ENCODE measurements at regions of chr6 and their contacts with region 1.

Region 1: GRCh38 chr6:147839708-147840610 is 331.5 kb downstream of the SAMD5 start:
- DNase-seq: no peak
- ATAC-seq: no peak
- H3K4me3 ChIP-seq: no peak overlapping the region
- H3K27ac ChIP-seq: no peak overlapping the region
- H3K4me1 ChIP-seq: no peaks in the 10 kb centered on the region
- H3K27me3 ChIP-seq: no peaks in the 10 kb centered on the region
- CTCF ChIP-seq: no peak
- POLR2A ChIP-seq: no peak

Region 2: DNA sequence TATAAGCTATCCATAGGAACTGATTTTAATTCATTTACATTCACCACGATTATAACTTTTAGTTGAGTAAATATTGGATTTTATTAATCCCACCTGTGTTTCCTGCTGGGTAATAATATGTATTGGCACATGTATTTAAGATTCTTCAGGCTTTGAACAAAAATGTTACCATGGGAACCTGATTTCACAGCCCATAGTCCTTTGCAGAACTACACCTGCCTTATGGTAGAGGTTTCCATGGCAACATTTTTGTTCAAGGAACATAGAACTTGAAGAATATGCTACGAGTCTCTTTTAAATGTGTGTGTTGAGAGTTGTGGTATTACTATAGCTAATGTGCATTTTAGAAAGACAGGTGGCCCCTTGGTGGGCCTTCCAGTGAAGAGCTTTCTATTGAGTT is 14.1 kb before region 1 on chr6:
- in situ Hi-C with region 1: no loop called
- intact Hi-C with region 1: loop called (anchors 1 kb)
- DNase-seq: no peak
- ATAC-seq: no peak
- H3K4me3 ChIP-seq: no peak overlapping the region
- H3K27ac ChIP-seq: no peak overlapping the region
- H3K4me1 ChIP-seq: no peaks in the 10 kb centered on the region
- H3K27me3 ChIP-seq: no peaks in the 10 kb centered on the region
- CTCF ChIP-seq: no peak
- POLR2A ChIP-seq: no peak

Region 3: DNA sequence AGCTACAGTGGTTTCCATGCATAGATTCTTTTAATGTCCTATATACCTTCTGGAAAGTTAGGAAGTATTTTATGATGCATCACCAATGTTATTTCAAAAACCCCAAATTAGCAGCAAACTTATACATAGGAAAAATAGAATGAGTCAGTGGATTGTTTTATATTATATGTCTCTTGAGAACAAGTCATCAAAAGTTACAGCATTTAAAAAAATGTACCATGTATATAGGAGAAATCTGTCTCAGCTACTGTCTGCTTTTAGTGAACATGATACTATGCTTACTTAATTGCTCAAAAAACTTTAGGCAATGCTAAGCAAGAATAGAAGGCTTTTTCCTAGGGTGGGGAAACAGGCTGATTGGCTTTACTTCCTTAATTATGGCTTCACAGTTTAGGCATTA is 33.9 kb after region 1 on chr6:
- in situ Hi-C with region 1: no loop called
- intact Hi-C with region 1: no loop called
- DNase-seq: no peak
- ATAC-seq: no peak
- H3K4me3 ChIP-seq: no peak overlapping the region
- H3K27ac ChIP-seq: no peak overlapping the region
- H3K4me1 ChIP-seq: peaks cover 0 to under 1% of the 10 kb centered on the region in 2 donors
- H3K27me3 ChIP-seq: no peaks in the 10 kb centered on the region
- CTCF ChIP-seq: no peak
- POLR2A ChIP-seq: no peak

Region 4: GRCh38 chr6:147936703-147937470 is 96.9 kb after region 1 on chr6:
- in situ Hi-C with region 1: no loop called
- intact Hi-C with region 1: no loop called
- DNase-seq: no peak
- ATAC-seq: no peak
- H3K4me3 ChIP-seq: no peak overlapping the region
- H3K27ac ChIP-seq: no peak overlapping the region
- H3K4me1 ChIP-seq: no peaks in the 10 kb centered on the region
- H3K27me3 ChIP-seq: no peaks in the 10 kb centered on the region
- CTCF ChIP-seq: no peak
- POLR2A ChIP-seq: no peak

Measured in gastrocnemius medialis (tissue), 4 donors.